BJ (cell line): ENCODE measurements at regions of chr3 and their contacts with region 1.

Region 1: GRCh38 chr3:39288300-39288808 is 8.5 kb upstream of the CX3CR1 start:
- DNase-seq: no peak
- H3K4me3 ChIP-seq: no peak overlapping the region
- H3K27me3 ChIP-seq: no peaks in the 10 kb centered on the region
- CTCF ChIP-seq: peak; percentile 95

Region 2: DNA sequence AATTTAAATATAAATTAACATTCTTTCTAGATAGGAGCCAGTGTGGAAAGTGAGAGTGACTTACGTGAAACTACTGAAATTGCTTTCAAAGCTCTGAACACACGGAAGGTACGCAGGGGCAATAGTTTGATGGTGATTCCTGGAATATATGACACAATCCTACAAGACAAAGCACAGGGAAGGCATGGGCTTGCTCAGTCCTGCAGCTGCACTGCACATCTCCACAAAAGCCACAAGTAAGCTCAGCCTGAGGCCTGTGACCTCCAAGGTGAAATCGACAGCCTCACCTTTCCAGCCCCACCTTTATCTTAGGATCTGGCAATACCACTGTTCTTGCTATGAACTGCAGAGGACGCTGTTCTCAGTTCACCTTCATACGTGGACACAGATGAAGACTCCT is 363.0 kb before region 1 on chr3:
- CTCF ChIA-PET with region 1: no interaction called
- POLR2A ChIA-PET with region 1: no interaction called
- DNase-seq: no peak
- H3K4me3 ChIP-seq: no peak overlapping the region
- H3K27me3 ChIP-seq: no peaks in the 10 kb centered on the region; the same call in none of the 2 replicates
- CTCF ChIP-seq: no peak

Region 3: GRCh38 chr3:39094851-39095677 is 193.3 kb before region 1 on chr3:
- CTCF ChIA-PET with region 1: interaction called, 11 read pairs
- POLR2A ChIA-PET with region 1: no interaction called
- DNase-seq: no peak
- H3K4me3 ChIP-seq: no peak overlapping the region
- H3K27me3 ChIP-seq: no peaks in the 10 kb centered on the region
- CTCF ChIP-seq: no peak

Region 4: DNA sequence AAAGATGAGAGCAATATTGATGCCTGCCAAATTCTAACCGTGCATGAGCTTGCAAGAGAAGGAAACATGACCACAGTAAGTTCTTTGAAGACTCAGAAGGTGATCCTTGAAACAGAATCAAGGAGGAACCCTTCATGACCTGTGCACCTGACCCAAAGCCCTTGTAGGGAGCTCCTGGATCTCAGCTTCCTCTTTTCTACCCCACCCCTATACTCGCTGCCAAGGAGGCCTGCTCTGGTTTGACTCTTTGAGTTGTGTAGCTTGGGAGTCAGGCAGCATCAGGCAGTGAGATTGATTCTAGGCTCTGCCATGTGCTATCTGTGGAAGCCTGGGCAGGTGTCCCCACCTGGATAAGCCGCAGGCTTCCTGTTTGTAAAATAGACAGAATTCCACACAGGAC is 170.3 kb before region 1 on chr3:
- CTCF ChIA-PET with region 1: interaction called, 300 read pairs
- POLR2A ChIA-PET with region 1: no interaction called
- DNase-seq: no peak
- H3K4me3 ChIP-seq: no peak overlapping the region
- H3K27me3 ChIP-seq: no peaks in the 10 kb centered on the region
- CTCF ChIP-seq: no peak

Region 5: DNA sequence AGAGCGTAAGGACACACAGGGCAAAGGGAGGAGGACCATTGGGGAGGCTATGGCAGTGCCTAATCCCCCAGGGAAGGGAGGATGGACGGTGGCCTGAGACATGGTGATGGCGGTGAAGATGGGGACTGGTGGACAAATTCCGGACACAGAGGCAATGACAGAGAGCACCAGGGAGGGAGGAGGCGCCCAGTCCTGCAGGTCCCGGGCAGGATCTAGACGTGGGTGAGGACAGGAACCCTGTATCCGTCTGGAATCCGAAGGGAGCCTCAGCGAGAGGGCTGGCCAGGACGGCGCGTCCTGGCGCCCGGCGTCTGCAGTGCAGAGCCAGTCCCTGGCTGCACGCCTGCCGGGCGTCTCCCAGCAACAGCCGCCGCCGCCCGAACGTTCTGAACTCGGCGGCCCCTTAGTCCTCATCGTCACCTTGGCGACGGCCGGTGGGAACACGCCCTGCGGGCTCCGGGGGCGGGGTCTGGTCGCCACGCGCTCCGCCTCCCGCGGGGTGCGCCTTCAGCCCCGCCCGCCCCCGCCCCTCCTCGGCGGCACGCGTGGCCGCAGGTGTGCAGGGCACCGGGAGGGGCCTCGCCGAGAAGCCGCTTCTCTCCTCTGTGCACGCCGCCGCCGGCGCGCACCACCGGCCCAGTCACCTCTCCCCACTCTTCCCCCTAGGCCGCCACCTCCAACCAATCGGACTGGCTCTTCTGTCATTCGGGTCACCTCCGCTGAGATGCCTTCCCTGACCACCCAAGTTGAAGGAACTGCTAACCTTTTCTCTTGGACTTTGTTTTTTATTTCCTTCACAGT is 107.6 kb before region 1 on chr3:
- CTCF ChIA-PET with region 1: interaction called, 374 read pairs
- POLR2A ChIA-PET with region 1: no interaction called
- DNase-seq: peak; percentile 30
- H3K4me3 ChIP-seq: peak overlapping the region; percentile 40
- H3K27me3 ChIP-seq: no peaks in the 10 kb centered on the region
- CTCF ChIP-seq: peak; percentile 44

Region 6: GRCh38 chr3:39208463-39209055 is 79.8 kb before region 1 on chr3:
- CTCF ChIA-PET with region 1: interaction called, 124 read pairs
- POLR2A ChIA-PET with region 1: no interaction called
- DNase-seq: no peak
- H3K4me3 ChIP-seq: no peak overlapping the region
- H3K27me3 ChIP-seq: peaks cover 8% of the 10 kb centered on the region
- CTCF ChIP-seq: peak; percentile 80

Region 7: DNA sequence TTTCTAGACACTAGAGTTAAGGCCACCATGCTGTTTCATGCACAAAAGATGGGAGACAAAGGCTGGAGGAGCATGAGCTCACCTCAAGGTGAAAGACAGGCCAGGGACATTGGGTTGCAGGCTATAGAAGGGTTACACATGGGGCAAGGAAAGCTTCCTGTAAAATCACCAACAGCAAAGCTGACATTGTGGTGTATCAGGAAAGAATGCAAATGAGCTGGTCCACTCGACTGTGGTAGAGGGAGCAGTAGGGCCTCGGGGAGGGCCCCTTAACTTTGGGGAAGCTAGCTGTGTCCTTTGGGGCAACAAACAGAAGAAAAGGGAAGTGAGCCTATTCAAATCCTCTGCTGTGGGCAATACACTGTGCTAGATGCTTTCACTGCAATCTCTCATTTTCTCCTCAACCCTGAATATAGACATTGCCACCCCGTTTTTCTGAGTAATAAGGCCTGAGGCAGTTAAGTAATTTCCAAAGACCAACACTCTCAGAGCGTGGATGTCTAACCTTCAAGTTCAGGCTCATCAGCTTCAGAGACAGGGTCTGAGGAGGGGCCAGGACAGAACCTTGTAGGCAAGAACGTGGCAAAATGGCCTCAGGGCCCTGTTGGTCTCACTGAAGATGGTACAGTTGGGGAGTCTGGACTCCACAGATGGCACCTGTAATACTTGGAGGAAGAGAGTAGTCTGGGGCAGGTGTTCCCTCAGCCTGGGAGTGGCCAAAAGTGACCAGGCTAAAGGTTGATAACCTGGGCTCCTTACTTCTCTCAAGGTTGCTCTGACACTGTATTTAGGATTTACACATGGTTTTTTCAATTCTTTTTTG is 32.6 kb before region 1 on chr3:
- CTCF ChIA-PET with region 1: interaction called, 11 read pairs
- POLR2A ChIA-PET with region 1: no interaction called
- DNase-seq: no peak
- H3K4me3 ChIP-seq: no peak overlapping the region
- H3K27me3 ChIP-seq: peaks cover 7% of the 10 kb centered on the region
- CTCF ChIP-seq: no peak

Region 8: GRCh38 chr3:40317061-40317855 is 1028.9 kb after region 1 on chr3:
- CTCF ChIA-PET with region 1: no interaction called
- POLR2A ChIA-PET with region 1: no interaction called
- DNase-seq: no peak
- H3K4me3 ChIP-seq: no peak overlapping the region
- H3K27me3 ChIP-seq: no peaks in the 10 kb centered on the region
- CTCF ChIP-seq: peak; percentile 76